ENCODE measurements at regions of chr6 and their contacts with region 1.

Region 1: GRCh38 chr6:42043787-42044475 is 6.4 kb upstream of the TAF8 start:
- DNase-seq: peak; percentile 87 to 94 (median 91)
- ATAC-seq: peak; percentile 69
- H3K4me3 ChIP-seq: no peak overlapping the region
- H3K4me1 ChIP-seq: peaks cover 32% of the 10 kb centered on the region
- CTCF ChIP-seq: peak; percentile 89

Region 2: DNA sequence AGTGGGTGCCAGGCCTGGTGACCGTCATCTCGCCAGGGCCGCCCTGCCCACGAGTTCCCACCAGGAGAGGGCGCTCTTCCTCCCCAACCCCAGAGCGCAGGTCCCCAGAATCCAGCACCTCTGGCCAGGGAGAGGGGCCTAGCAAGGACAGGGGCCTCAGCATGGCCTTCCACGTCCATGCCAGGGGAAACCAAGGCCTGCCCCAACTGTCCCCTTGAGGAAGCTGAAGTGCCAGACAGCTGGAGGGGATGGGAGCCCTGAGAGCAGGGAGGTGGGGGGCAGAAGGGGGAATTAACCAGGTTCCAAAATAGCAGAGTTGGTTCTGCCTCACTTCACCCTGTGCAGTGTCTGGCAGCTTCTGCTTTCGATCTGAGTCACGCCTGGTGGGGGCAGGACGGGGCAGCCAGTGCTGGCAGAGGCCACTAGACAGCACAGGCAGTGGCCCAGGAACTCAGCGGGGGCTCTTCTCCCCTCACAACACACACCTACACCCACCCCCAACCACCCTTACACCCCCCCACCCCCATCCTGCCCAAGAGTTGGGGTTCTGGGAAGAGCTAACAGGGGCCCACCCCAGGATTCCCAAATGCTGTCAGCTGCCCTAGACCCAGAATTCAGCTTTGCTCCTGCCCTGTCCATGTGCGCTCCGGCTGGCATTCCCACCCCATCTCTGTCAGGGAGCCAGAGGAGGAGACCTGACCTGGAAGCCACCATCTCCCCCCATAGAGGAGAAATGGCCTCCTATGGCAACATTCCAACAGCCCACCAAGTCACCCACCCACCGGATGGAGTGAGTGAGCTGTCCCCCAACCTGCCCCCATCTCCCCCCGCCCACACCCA is 337.7 kb before region 1 on chr6:
- intact Hi-C with region 1: no loop called
- DNase-seq: peak; percentile 84 to 88 (median 87)
- ATAC-seq: peak; percentile 83
- H3K4me3 ChIP-seq: no peak overlapping the region
- H3K4me1 ChIP-seq: peaks cover 17% of the 10 kb centered on the region
- CTCF ChIP-seq: peak; percentile 80

Region 3: GRCh38 chr6:41787219-41787917 is 256.6 kb before region 1 on chr6 and contains the start of gene TOMM6:
- intact Hi-C with region 1: loop called in 1 of 2 experiments (anchors 10 kb)
- DNase-seq: peak; percentile 98
- ATAC-seq: peak; percentile 94
- H3K4me3 ChIP-seq: peak within 1 kb of the TSS; percentile 67
- H3K4me1 ChIP-seq: peaks cover 16% of the 10 kb centered on the region
- CTCF ChIP-seq: peak; percentile 92
- total RNA-seq, gene TOMM6: 96.9 to 116 (median 96.9) TPM

Region 4: GRCh38 chr6:41941280-41942066 is 102.5 kb before region 1 on chr6 and contains the start of gene CCND3:
- intact Hi-C with region 1: loop called (anchors 5 to 10 kb)
- DNase-seq: peak; percentile 94 to 96 (median 95)
- ATAC-seq: peak; percentile 92
- H3K4me3 ChIP-seq: peak within 1 kb of the TSS; percentile 44
- H3K4me1 ChIP-seq: peaks cover 20% of the 10 kb centered on the region
- CTCF ChIP-seq: no peak
- total RNA-seq, gene CCND3: 51.2 to 69.1 (median 60.0) TPM

Region 5: GRCh38 chr6:42122718-42123151 is 78.8 kb after region 1 on chr6:
- intact Hi-C with region 1: no loop called
- DNase-seq: peak; percentile 84 to 89 (median 86)
- ATAC-seq: peak; percentile 74
- H3K4me3 ChIP-seq: no peak overlapping the region
- H3K4me1 ChIP-seq: peaks cover 26% of the 10 kb centered on the region
- CTCF ChIP-seq: no peak

Region 6: GRCh38 chr6:42175860-42176259 is 131.9 kb after region 1 on chr6:
- intact Hi-C with region 1: no loop called
- DNase-seq: no peak
- ATAC-seq: no peak
- H3K4me3 ChIP-seq: no peak overlapping the region
- H3K4me1 ChIP-seq: peaks cover 3% of the 10 kb centered on the region
- CTCF ChIP-seq: no peak

Measured in mucosa of descending colon (tissue), 3 donors.